SK-N-SH (cell line): ENCODE measurements at regions of chr2 and their contacts with region 1.

Region 1: DNA sequence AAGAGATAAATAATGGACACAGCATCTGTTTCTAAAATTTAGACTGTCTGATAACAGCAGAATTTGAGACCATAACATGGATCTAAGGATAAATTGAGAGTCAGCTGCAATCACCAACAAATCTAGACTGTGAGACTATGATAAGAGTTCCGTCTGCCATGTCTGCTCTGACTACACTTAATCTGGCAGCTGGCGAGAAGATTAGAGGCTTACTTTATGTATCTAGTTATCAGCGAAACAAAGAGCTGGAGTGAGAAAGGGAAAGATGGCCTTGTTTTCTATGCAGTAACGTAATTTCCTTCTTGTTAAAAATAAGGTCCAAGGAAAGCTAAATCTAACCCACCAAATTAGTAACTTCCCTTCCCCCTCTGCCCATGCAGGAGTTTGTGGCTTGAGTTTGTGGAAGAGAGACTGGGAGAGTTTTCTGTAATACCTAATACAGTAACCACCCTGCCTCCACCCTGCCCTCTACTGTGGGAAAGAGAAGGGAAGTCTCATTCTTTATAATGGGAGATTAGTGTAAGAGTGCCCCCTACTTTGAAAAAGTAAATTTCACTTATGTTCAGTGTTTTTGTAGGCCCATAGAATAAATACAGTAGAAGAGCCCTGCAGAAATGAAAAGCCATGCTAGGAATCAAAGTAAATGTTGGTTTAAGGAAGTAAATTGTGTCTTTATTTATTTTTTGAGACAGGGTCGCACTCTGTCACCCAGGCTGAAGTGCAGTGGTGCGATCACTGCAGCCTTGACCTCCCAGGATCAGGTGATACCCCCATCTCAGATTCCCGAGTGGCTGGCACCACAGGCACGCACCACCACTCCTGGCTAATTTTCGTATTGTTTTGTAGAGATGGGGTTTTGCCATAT is 27.5 kb downstream of the EML4 start:
- DNase-seq: peak; percentile 77
- H3K4me3 ChIP-seq: no peak overlapping the region; a peak in 1 of 4 replicates
- H3K27ac ChIP-seq: peak overlapping the region; percentile 4 to 94; a peak in 3 of 4 replicates
- H3K4me1 ChIP-seq: peaks cover 31 to 42% of the 10 kb centered on the region in 2 experiments; a peak in 3 of 4 replicates
- H3K27me3 ChIP-seq: no peaks in the 10 kb centered on the region
- CTCF ChIP-seq: peak; percentile 59
- EP300 ChIP-seq: peak in 1 of 2 experiments; percentile 93; a peak in 2 of 4 replicates
- RAD21 ChIP-seq: peak; percentile 90

Region 2: GRCh38 chr2:41610501-41611190 is 586.0 kb before region 1 on chr2:
- CTCF ChIA-PET with region 1: no interaction called
- POLR2A ChIA-PET with region 1: no interaction called
- DNase-seq: no peak
- H3K4me3 ChIP-seq: peak overlapping the region in 1 of 2 experiments; percentile 16; a peak in 1 of 4 replicates
- H3K27ac ChIP-seq: peak overlapping the region in 1 of 2 experiments; percentile 60; a peak in 2 of 4 replicates
- H3K4me1 ChIP-seq: no peaks in the 10 kb centered on the region; a peak in 3 of 4 replicates
- H3K27me3 ChIP-seq: no peaks in the 10 kb centered on the region
- CTCF ChIP-seq: no peak
- EP300 ChIP-seq: no peak
- RAD21 ChIP-seq: no peak

Region 3: GRCh38 chr2:41695198-41696113 is 501.2 kb before region 1 on chr2:
- CTCF ChIA-PET with region 1: no interaction called
- POLR2A ChIA-PET with region 1: no interaction called
- DNase-seq: no peak
- H3K4me3 ChIP-seq: no peak overlapping the region
- H3K27ac ChIP-seq: no peak overlapping the region
- H3K4me1 ChIP-seq: peaks cover 0 to 8% of the 10 kb centered on the region in 2 experiments; a peak in 1 of 4 replicates
- H3K27me3 ChIP-seq: no peaks in the 10 kb centered on the region
- CTCF ChIP-seq: no peak
- EP300 ChIP-seq: no peak
- RAD21 ChIP-seq: peak; percentile 13; the same call in 1 of the 2 replicates

Region 4: DNA sequence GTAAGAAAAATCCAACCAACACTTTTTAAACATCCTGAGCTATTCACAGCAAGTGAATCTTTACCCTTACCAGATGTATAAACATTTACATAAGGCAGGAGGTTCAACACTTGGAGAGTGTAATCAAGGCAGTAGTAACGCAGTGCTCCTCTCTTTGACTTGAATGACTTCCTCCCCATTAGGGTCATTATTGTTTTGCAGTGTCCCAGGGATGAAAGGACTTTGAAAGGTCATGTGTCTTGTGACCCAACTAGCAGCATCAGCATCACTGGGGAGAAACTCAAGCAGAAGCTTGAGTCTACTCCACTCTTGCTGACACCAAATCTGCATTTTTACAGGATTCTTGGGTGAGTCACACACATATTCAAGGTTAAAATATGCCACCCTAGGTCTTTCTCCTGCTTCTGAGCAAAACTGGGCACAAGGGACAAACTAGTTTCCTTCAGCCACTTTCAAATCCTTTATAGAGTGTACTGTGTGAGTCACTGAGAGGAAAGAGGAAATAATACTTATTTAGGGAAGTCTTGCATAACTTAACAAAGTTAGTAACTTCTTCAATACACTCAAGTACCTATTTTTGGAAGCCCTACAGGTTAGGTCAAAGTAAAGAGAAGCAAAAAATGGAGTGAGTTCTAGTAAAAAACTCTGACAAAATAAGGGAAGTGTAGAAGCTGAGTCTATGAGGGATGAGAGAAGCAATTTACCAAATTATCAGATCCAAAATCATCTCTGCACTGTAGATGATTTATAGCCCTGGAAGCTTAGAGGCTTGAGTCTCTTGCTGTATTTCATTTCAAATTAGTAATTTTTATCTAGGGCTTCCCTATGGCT is 78.5 kb before region 1 on chr2:
- CTCF ChIA-PET with region 1: interaction called, 29 read pairs
- POLR2A ChIA-PET with region 1: no interaction called
- DNase-seq: no peak
- H3K4me3 ChIP-seq: peak overlapping the region in 1 of 2 experiments; percentile 9; a peak in 1 of 4 replicates
- H3K27ac ChIP-seq: peak overlapping the region; percentile 86 to 94
- H3K4me1 ChIP-seq: peaks cover 21 to 30% of the 10 kb centered on the region in 2 experiments
- H3K27me3 ChIP-seq: no peaks in the 10 kb centered on the region
- CTCF ChIP-seq: no peak
- EP300 ChIP-seq: peak; percentile 52 to 74; a peak in 3 of 4 replicates
- RAD21 ChIP-seq: no peak; the same call in 1 of the 2 replicates

Region 5: DNA sequence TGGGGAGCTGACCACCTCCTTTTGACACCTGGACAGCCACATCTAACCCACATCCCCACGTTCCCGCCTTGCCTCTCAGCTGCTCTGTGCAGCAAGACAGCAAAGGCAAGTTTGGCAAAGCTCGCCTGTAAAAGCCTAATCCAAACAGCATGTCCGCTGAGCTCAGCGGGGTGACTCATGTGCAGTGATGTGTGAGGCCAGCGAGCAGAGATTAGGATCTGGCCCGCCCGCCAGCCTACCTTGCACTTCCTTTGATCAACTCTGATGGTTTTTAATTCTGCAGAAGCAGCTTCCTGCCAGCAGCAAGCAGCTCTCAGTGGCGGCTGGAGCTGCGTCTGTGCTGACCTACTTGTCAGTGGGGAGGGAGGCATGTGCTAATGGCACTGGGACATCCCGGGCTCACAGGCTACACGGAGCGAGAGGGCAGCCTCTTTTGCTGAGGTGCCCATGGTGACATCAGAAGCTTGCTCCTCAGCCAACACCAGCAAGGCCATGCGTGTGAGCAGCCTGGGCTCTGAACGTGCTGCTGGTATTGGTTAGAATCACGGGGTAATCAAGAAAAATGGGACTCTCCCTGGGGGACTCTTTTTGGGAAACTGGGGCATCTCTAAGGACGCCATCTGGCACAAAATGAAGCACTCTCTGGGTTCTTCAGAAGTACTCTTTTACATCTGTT is 63.5 kb before region 1 on chr2:
- CTCF ChIA-PET with region 1: interaction called, 20 read pairs
- POLR2A ChIA-PET with region 1: interaction called, 5 read pairs
- DNase-seq: peak; percentile 85
- H3K4me3 ChIP-seq: peak overlapping the region; percentile 36 to 46
- H3K27ac ChIP-seq: peak overlapping the region; percentile 87 to 100
- H3K4me1 ChIP-seq: peaks cover 51 to 65% of the 10 kb centered on the region in 2 experiments
- H3K27me3 ChIP-seq: no peaks in the 10 kb centered on the region
- CTCF ChIP-seq: no peak
- EP300 ChIP-seq: peak; percentile 97 to 98
- RAD21 ChIP-seq: peak; percentile 57; the same call in 1 of the 2 replicates

Region 6: DNA sequence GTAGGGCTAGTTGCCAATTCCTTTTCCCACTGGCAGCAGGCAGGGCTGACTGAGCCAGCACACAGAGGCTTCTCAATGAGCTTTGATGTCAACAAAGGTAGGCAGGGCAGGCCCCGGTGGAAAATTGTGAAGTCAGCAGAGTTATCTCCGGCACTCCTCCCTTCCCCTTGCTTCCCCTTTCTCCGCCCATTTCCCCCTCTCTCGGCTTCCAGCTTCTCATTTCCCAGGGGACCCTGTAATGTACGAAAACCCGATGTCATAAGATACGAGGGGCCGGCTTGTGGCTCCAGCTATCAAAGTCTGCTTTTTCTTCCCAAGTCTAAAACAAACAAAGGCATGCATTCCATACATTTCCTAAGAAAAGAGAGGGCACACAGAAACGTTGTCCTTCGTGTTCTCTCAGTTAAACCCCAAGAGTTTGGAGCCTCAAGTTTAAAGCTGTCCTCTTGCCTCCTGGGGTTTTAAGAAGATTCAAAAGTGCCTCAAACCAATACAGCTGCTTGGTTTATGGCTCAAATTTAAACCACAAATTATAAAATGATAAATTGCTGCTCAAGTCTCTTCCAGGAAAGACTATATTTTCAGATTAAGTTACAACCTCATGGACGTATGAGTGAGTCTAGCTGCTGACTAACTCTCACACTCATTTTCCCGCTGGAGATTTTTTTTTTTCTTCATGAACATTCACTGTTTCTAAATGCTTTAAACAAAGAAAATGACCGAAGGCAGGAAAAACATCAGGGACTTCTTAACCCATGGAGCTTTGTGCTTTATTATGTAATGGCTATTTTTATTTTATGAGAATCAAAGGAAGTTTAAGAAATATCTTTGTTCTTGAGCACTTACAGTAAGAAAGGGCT is 54.7 kb before region 1 on chr2:
- CTCF ChIA-PET with region 1: interaction called, 12 read pairs
- POLR2A ChIA-PET with region 1: interaction called, 4 read pairs
- DNase-seq: peak; percentile 56
- H3K4me3 ChIP-seq: peak overlapping the region; percentile 26 to 52; a peak in 3 of 4 replicates
- H3K27ac ChIP-seq: peak overlapping the region; percentile 86 to 93
- H3K4me1 ChIP-seq: peaks cover 31 to 50% of the 10 kb centered on the region in 2 experiments
- H3K27me3 ChIP-seq: no peaks in the 10 kb centered on the region
- CTCF ChIP-seq: no peak
- EP300 ChIP-seq: peak; percentile 11 to 90
- RAD21 ChIP-seq: no peak

Region 7: GRCh38 chr2:42169100-42169873 is 27.3 kb before region 1 on chr2 and contains the start of gene EML4:
- CTCF ChIA-PET with region 1: interaction called, 34 read pairs
- POLR2A ChIA-PET with region 1: interaction called, 4 read pairs
- DNase-seq: peak; percentile 98
- H3K4me3 ChIP-seq: peak within 1 kb of the TSS; percentile 81 to 100
- H3K27ac ChIP-seq: peak within 1 kb of the TSS; percentile 72 to 92
- H3K4me1 ChIP-seq: peaks cover 16 to 24% of the 10 kb centered on the region in 2 experiments; a peak in 3 of 4 replicates
- H3K27me3 ChIP-seq: no peaks in the 10 kb centered on the region
- CTCF ChIP-seq: no peak
- EP300 ChIP-seq: no peak
- RAD21 ChIP-seq: 0 out of 2 replicates have a peak, but pooled peaks have one; percentile 8
- polyA plus RNA-seq, gene EML4: 35.0 and 45.8 TPM in 2 replicates

Region 8: DNA sequence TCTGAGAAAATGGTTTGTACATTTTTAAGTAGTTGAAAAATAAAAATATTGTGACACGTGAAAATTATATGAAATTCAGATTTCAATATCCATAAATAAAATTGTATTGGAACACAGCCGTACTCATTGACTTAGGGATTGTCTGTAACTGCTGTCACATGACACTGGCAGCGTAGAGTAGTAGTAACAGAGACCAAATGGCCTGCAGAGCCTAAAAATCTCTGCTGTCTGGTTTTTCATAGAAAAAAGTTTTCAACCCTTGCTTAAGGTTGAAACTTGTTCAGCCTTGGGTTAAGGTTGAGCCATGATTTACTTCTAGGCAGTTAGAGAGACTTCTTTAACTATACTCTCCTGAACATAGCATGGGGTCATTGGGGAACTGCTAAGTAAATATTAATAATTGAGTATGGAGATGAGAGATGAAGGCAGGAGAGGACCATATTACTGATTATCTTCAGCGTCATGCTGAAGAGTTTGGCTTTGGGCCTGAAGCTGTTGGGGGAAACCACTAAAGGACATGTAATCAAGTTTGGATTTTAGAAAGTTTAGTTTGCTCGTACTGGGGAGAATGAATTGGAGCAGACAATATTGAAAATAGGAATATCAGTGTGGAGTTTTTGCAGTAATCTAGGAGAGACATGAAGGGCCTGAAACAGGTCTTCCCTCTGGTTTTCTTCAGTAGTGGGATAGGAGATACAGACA is 11.3 kb before region 1 on chr2:
- CTCF ChIA-PET with region 1: interaction called, 11 read pairs
- POLR2A ChIA-PET with region 1: no interaction called
- DNase-seq: no peak
- H3K4me3 ChIP-seq: no peak overlapping the region
- H3K27ac ChIP-seq: peak overlapping the region in 1 of 2 experiments; percentile 5; a peak in 1 of 4 replicates
- H3K4me1 ChIP-seq: peaks cover 17 to 20% of the 10 kb centered on the region in 2 experiments; a peak in 3 of 4 replicates
- H3K27me3 ChIP-seq: no peaks in the 10 kb centered on the region
- CTCF ChIP-seq: no peak
- EP300 ChIP-seq: no peak
- RAD21 ChIP-seq: no peak